ENCODE measurements at regions of chr15 and their contacts with region 1.

Region 1: GRCh38 chr15:73972984-73973682 is 19.0 kb downstream of the STOML1 start:
- DNase-seq: peak; percentile 89
- ATAC-seq: peak; percentile 91 to 93

Region 2: GRCh38 chr15:74019734-74020133 is 46.6 kb after region 1 on chr15:
- intact Hi-C with region 1: no loop called
- DNase-seq: no peak
- ATAC-seq: no peak

Region 3: DNA sequence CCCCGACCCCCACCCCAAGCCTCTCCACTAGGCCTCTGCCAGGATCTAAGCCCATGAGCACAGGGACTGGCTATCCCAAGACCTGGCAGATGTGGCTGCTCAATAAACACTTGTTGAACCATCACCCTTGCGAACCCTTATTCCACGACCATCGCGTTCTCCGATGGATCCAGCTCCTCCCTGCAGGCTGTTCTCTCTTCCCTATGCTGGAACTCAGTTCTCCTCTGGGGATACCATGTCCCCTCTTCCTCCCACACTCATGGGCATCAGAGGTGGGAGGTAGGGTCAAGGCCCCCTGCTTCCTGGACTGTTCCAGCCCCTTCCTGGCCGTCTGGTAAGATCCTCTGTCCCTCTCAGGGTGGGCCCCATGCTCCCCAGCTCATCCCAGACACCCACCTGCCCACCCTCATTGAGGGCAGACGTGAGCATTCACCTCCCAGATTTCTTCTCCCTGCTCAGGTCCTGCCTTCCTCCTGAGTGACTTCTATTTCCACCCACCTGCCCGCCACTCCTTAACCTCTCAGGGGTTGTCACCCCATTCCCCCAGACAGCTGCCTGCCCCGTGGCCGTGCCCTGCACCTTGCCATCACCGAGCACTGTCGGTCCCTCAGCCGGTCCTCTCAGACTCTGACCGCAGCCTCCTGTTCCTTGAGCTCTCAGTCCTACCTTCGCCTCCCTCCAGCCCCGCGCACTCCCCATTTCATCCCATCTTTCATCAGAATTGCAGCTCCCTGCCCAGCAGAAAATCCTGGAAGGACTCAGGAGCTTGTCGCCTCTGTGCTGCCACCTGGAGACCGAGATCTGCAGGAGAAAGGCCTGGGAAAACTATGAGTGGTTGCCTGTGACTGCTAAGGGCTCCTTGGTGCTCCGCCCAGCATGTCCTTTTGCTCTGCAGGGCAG is 63.4 kb after region 1 on chr15:
- intact Hi-C with region 1: loop called (anchors 1 to 10 kb)
- DNase-seq: peak; percentile 63
- ATAC-seq: peak; percentile 2 to 31

Region 4: DNA sequence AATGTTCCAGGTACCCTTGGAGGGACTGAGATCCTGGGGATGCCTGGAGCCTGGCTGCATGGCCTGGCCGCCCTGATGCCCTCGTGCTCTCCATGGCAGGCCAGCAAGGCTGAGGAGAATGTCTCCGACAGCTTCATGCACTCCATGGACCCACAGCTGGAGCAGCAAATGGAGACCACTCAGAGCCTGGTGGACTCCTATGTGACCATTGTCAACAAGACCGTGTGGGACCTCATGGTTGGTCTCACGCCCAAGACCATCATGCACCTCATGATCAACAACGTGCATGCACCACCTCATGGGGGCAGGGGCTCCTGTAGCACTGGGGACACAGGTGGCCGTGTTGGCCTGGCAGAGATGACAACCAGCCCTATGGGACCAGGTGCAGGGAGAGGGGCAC is 89.5 kb after region 1 on chr15:
- intact Hi-C with region 1: no loop called
- DNase-seq: no peak
- ATAC-seq: no peak

Region 5: GRCh38 chr15:74307827-74308644 is 334.9 kb after region 1 on chr15:
- intact Hi-C with region 1: loop called in 1 of 2 experiments (anchors 10 kb)
- DNase-seq: peak; percentile 47
- ATAC-seq: peak; percentile 80 to 88

Measured in left cardiac atrium (tissue), 4 donors.